ENCODE measurements at regions of chr14 and their contacts with region 1.

Region 1: GRCh38 chr14:68506021-68506644 is 286.7 kb downstream of the ZFP36L1 start:
- ATAC-seq: peak in 6 of 8 experiments; percentile 35 to 75 (median 68)
- H3K4me3 ChIP-seq: no peak overlapping the region
- H3K27ac ChIP-seq: peak overlapping the region; percentile 39 to 47
- H3K4me1 ChIP-seq: peaks cover 30 to 61% of the 10 kb centered on the region in 2 donors

Region 2: GRCh38 chr14:67787673-67788072 is 718.5 kb before region 1 on chr14:
- in situ Hi-C with region 1: no loop called
- ATAC-seq: no peak
- H3K4me3 ChIP-seq: no peak overlapping the region
- H3K27ac ChIP-seq: no peak overlapping the region
- H3K4me1 ChIP-seq: no peaks in the 10 kb centered on the region

Region 3: DNA sequence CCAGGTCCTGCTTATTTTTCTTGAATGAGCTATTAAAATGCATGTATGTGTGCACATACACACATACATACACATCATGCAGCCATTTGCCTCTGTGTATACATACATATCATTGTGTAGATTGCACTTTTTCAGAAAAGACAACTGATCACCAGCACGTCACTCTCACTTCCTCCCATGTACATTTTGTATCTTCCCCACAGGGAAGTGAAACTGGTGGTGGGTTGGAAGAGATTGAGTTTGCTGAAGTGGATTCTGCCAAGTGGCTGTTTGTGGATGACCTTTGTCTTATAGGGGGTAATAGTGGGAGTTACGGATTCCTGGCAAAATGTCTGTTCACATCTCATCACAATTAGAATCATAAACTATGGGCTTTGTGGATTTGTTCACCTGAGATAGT is 237.9 kb before region 1 on chr14:
- in situ Hi-C with region 1: loop called in 1 of 9 experiments (anchors 25 kb)
- ATAC-seq: no peak
- H3K4me3 ChIP-seq: no peak overlapping the region
- H3K27ac ChIP-seq: no peak overlapping the region
- H3K4me1 ChIP-seq: peaks cover 8 to 10% of the 10 kb centered on the region in 2 donors

Region 4: GRCh38 chr14:68328509-68328908 is 177.6 kb before region 1 on chr14:
- in situ Hi-C with region 1: no loop called
- ATAC-seq: no peak
- H3K4me3 ChIP-seq: no peak overlapping the region
- H3K27ac ChIP-seq: no peak overlapping the region
- H3K4me1 ChIP-seq: peaks cover 5 to 11% of the 10 kb centered on the region in 2 donors